Heart right ventricle (tissue), 16 donors: ENCODE measurements at regions of chr6 and their contacts with region 1.

Region 1: DNA sequence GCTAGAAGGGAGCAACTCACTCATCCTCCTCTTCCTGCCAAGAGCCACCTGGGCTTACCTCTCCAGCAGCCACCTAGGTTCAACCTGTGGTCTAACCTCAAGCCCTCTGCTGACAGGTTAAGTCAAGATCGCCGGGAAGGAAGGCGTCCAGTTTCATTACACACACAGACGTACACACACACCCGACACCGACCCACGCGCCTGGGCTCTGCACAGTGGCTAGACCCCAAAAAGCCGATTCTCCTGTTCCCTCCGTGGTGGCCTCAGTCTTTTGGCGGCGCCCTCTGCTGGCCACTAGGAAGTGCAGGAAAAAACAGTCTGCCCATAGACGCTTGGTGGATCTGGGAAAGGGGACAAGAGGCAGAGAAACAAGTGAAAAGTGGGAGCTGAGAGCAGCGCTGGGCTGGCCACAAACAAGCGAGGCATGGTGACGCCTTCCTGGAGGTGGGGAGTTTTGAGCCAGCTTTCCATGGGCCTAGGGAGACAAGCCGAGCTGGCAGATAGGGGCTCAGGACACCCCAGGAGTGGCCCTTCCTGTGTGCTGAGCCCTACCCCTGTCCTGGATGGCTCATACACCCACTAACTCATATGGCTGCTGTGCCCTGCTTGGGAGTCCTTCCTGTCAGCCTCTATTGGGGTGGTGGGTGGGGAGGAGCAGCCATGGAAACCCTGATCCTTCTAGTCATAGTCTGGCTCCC is 52.7 kb downstream of the MRPL14 start:
- DNase-seq: peak; percentile 70 to 73
- ATAC-seq: peak; percentile 56 to 84 (median 73)
- H3K4me3 ChIP-seq: peak overlapping the region in 7 of 10 donors; percentile 22 to 62 (median 57)
- H3K27ac ChIP-seq: peak overlapping the region; percentile 70 to 93 (median 84)
- H3K4me1 ChIP-seq: peaks cover 30 to 60% (median 50%) of the 10 kb centered on the region in 9 donors
- H3K27me3 ChIP-seq: peaks cover 0 to 20% (median 0%) of the 10 kb centered on the region in 7 donors
- CTCF ChIP-seq: peak; percentile 87 to 95 (median 89)

Region 2: GRCh38 chr6:43667245-43668150 is 407.1 kb before region 1 on chr6:
- intact Hi-C with region 1: loop called in 9 of 10 experiments (anchors 1 to 5 kb)
- DNase-seq: peak; percentile 83 to 85
- ATAC-seq: peak; percentile 49 to 75 (median 59)
- H3K4me3 ChIP-seq: peak overlapping the region in 3 of 10 donors; percentile 15 to 24 (median 22)
- H3K27ac ChIP-seq: peak overlapping the region in 8 of 10 donors; percentile 19 to 85 (median 80)
- H3K4me1 ChIP-seq: peaks cover 26 to 47% (median 41%) of the 10 kb centered on the region in 9 donors
- H3K27me3 ChIP-seq: no peaks in the 10 kb centered on the region
- CTCF ChIP-seq: peak; percentile 85 to 98 (median 95)

Region 3: DNA sequence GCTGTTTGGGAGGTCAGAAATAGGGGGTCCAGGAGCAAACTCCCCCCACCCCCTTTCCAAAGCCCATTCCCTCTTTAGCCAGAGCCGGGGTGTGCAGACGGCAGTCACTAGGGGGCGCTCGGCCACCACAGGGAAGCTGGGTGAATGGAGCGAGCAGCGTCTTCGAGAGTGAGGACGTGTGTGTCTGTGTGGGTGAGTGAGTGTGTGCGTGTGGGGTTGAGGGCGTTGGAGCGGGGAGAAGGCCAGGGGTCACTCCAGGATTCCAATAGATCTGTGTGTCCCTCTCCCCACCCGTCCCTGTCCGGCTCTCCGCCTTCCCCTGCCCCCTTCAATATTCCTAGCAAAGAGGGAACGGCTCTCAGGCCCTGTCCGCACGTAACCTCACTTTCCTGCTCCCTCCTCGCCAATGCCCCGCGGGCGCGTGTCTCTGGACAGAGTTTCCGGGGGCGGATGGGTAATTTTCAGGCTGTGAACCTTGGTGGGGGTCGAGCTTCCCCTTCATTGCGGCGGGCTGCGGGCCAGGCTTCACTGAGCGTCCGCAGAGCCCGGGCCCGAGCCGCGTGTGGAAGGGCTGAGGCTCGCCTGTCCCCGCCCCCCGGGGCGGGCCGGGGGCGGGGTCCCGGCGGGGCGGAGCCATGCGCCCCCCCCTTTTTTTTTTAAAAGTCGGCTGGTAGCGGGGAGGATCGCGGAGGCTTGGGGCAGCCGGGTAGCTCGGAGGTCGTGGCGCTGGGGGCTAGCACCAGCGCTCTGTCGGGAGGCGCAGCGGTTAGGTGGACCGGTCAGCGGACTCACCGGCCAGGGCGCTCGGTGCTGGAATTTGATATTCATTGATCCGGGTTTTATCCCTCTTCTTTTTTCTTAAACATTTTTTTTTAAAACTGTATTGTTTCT is 304.8 kb before region 1 on chr6 and contains the start of gene VEGFA:
- intact Hi-C with region 1: loop called (anchors 1 to 5 kb)
- DNase-seq: peak; percentile 91 to 93
- ATAC-seq: peak; percentile 70 to 86 (median 80)
- H3K4me3 ChIP-seq: peak within 1 kb of the TSS; percentile 85 to 98 (median 94)
- H3K27ac ChIP-seq: peak within 1 kb of the TSS; percentile 86 to 99 (median 95)
- H3K4me1 ChIP-seq: peaks cover 3 to 45% (median 37%) of the 10 kb centered on the region in 9 donors
- H3K27me3 ChIP-seq: no peaks in the 10 kb centered on the region
- CTCF ChIP-seq: peak; percentile 94 to 99 (median 97)
- total RNA-seq, gene VEGFA: 163 to 456 (median 216) TPM

Region 4: DNA sequence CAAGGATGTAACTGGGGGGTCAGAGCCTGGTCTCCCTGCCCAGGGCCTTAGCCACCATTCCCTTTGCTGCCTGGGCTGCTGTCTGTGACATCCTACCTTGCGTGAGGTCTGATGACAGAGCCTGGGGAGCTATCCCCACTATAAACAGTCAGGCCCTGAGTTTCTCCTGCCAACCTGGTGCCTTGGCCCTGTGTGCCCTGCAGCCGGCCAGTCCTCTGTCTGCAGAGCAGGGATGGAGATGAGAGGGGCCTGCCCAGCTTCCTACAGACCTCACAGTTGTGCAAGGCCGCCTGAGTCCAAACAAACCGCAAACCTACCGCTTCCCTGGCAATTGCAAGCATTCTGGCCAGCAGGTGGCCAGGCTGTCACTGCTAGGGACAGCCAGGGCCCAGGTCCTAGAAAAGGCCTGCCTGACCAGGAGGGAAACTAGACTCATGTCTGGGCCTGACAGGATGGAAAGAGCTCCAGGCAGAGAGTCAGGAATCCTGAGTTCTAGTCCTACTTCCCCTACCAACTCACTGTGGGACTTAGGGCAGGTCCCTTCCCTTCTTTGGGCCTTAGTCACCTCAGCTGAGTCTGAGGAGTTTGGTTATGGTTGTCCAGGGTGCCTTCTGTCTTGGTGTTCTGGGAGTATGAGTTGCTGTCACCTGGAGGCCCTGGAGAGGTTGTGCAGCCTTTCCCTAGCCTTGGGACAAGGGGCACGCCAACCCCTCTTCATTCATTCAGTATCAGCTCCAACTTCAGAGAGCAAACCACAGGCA is 218.4 kb before region 1 on chr6:
- intact Hi-C with region 1: loop called in 1 of 10 experiments (anchors 10 kb)
- DNase-seq: peak in 1 of 2 donors; percentile 30
- ATAC-seq: peak in 7 of 8 donors; percentile 41 to 69 (median 54)
- H3K4me3 ChIP-seq: no peak overlapping the region
- H3K27ac ChIP-seq: peak overlapping the region in 1 of 10 donors; percentile 22
- H3K4me1 ChIP-seq: no peaks in the 10 kb centered on the region
- H3K27me3 ChIP-seq: no peaks in the 10 kb centered on the region
- CTCF ChIP-seq: peak in 8 of 9 donors; percentile 19 to 58 (median 46)

Region 5: DNA sequence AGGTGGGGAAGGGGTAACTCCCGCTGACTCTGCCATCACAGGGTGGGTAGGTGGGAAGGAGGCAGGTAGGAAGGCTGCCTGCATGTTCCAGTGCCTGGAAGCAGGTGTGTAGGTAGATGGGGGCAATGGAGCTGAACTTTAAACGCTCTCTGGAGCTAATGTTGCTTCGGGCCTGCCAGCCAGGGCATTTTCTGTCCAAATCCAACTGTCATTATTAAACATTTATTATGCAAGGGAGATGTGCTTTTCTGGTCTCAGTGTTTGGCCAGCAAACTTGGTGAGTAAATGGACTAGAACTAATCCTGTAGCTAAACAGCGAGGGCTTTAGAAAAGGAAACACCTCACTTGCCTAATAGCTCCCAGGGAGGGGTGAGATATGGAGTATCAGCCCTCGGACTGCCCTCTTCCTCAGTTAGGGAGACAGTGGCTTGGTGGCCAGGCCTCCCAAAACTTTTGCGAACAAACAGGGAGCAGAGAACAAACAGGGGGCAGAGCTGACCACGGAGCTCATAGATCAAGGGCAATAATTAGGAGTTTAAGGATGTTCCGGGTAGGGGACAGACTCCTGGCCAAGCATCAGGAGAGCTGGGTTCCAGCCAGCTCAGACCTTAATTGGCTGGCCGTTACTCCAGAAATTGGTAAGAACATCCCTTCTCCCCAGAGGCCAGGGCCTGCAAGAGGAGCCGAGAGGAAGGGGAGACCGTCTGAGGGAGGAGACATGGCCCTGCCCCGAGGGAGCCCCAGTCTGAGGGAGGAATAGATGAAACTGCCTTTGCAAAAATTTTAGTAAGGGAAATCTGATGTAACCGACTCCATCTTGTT is 173.5 kb before region 1 on chr6:
- intact Hi-C with region 1: no loop called
- DNase-seq: no peak
- ATAC-seq: peak in 3 of 8 donors; percentile 36 to 55 (median 54)
- H3K4me3 ChIP-seq: no peak overlapping the region
- H3K27ac ChIP-seq: no peak overlapping the region
- H3K4me1 ChIP-seq: peaks cover 0 to 6% (median 0%) of the 10 kb centered on the region in 9 donors
- H3K27me3 ChIP-seq: no peaks in the 10 kb centered on the region
- CTCF ChIP-seq: no peak

Region 6: GRCh38 chr6:43990627-43991619 is 83.7 kb before region 1 on chr6:
- intact Hi-C with region 1: loop called in 1 of 10 experiments (anchors 10 kb)
- DNase-seq: no peak
- ATAC-seq: peak in 7 of 8 donors; percentile 2 to 33 (median 8)
- H3K4me3 ChIP-seq: no peak overlapping the region
- H3K27ac ChIP-seq: peak overlapping the region; percentile 41 to 94 (median 84)
- H3K4me1 ChIP-seq: peaks cover 12 to 70% (median 24%) of the 10 kb centered on the region in 9 donors
- H3K27me3 ChIP-seq: no peaks in the 10 kb centered on the region
- CTCF ChIP-seq: no peak

Region 7: DNA sequence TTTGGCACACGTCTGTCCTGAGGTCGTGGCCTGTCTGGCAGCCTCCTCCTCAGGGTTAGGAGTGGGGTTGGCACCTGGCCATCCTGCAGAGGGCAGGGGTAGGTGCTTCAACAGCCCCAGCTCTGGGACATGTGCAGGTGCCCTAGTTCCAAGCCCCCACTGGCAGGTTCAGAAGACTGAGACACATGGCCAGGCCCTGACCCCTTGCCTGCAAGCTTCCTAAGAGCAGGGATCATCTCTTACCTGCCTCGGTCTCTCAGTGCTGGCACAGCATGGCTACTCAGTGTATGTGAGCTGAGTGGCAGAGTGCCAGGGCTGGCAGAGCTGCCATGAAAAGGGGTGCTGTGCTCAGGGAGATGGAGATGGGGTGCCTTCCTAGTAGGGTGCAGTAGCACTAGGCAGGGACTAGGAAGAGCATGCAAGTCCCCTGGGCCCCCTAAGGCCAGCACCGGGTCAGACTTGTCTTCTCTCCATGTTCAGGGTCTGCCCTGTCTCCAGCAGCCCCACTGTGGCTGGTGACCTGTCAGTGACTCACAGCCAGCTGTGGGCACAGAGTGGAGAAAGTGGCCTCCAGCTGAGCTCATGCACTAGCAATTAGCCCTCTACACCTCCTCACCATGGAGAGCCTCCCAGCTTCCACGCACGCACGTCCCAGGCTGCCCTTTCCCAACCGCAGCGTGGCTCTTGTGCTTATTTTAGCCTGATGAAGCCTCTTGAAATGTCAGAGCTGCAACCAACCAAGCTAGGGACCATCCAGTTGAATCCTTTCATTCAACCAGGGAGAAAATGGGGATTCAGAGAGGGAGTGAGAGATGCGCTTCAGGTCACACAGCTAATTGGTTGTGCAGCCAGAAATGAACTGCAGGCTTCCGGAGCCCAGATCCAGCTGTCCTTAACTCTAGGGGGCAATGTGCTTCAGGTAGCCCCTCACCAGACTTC is 63.9 kb before region 1 on chr6:
- intact Hi-C with region 1: loop called in 4 of 10 experiments (anchors 2 to 10 kb)
- DNase-seq: peak; percentile 51 to 58
- ATAC-seq: peak; percentile 51 to 94 (median 87)
- H3K4me3 ChIP-seq: peak overlapping the region in 1 of 10 donors; percentile 3
- H3K27ac ChIP-seq: peak overlapping the region in 9 of 10 donors; percentile 59 to 92 (median 82)
- H3K4me1 ChIP-seq: peaks cover 0 to 42% (median 19%) of the 10 kb centered on the region in 9 donors
- H3K27me3 ChIP-seq: peaks cover 0 to 16% (median 0%) of the 10 kb centered on the region in 7 donors
- CTCF ChIP-seq: no peak

Region 8: GRCh38 chr6:44762496-44762895 is 687.9 kb after region 1 on chr6:
- intact Hi-C with region 1: no loop called
- DNase-seq: no peak
- ATAC-seq: no peak
- H3K4me3 ChIP-seq: no peak overlapping the region
- H3K27ac ChIP-seq: no peak overlapping the region
- H3K4me1 ChIP-seq: no peaks in the 10 kb centered on the region
- H3K27me3 ChIP-seq: no peaks in the 10 kb centered on the region
- CTCF ChIP-seq: no peak